Activated T-helper 1 cell treated with anti-CD3 and anti-CD28 coated beads, Interleukin-12 subunit alpha, Interleukin-12 subunit beta, Interleukin-2, Interleukin-4 antibody, amounts not matched to agents 30 ng/mL and 10 ng/mL and 1 ng/mL, durations not matched to agents 14 hours and 24 hours and 36 hours (primary cell): ENCODE measurements at regions of chr6 and their contacts with region 1.

Region 1: DNA sequence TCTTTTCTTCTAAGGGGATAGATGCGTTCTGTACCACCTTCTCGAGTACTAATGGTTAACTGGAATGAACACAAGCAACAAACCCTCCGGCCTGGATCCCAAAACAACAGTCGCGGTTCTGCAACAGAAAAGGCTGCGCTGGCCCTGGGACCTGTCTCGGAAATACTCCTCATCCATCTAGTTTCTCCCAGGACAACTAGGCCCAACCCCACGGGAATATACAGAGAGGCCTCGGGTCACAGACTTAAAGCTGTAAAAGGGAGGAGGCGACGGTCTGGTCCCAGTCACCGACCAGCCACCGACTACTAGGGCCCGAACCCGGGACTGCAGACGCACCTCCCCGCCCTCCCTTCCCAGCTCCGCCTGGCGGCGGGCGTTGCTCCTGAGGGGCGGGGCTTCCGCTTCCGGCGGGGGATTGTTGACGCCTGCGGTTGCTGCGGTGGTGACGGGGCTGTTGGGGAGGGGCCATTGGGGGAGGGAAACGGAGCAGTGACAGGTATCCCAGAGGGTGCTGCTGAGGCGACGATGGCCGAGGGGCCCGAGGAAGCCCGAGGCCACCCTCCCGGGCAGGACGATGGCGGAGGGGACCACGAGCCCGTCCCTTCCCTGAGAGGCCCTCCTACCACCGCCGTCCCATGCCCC is at the start of gene FAM8A1:
- DNase-seq: peak; percentile 92
- H3K4me3 Mint-ChIP-seq: peak within 1 kb of the TSS; percentile 85
- H3K27ac Mint-ChIP-seq: peak within 1 kb of the TSS; percentile 78
- H3K4me1 Mint-ChIP-seq: peaks cover 35% of the 10 kb centered on the region
- H3K27me3 Mint-ChIP-seq: peaks cover 2% of the 10 kb centered on the region
- total RNA-seq, gene FAM8A1: 4.5 and 4.6 TPM in 2 replicates

Region 2: GRCh38 chr6:17458966-17459365 is 141.0 kb before region 1 on chr6:
- intact Hi-C with region 1: no loop called
- DNase-seq: no peak
- H3K4me3 Mint-ChIP-seq: no peak overlapping the region
- H3K27ac Mint-ChIP-seq: no peak overlapping the region
- H3K4me1 Mint-ChIP-seq: no peaks in the 10 kb centered on the region
- H3K27me3 Mint-ChIP-seq: peaks cover 5% of the 10 kb centered on the region

Region 3: GRCh38 chr6:17621003-17621402 is 21.0 kb after region 1 on chr6:
- intact Hi-C with region 1: loop called (anchors 2 kb)
- DNase-seq: no peak
- H3K4me3 Mint-ChIP-seq: no peak overlapping the region
- H3K27ac Mint-ChIP-seq: peak overlapping the region; percentile 45
- H3K4me1 Mint-ChIP-seq: peaks cover 36% of the 10 kb centered on the region
- H3K27me3 Mint-ChIP-seq: no peaks in the 10 kb centered on the region

Region 4: GRCh38 chr6:17656092-17656491 is 56.1 kb after region 1 on chr6:
- intact Hi-C with region 1: loop called (anchors 5 kb)
- DNase-seq: no peak
- H3K4me3 Mint-ChIP-seq: no peak overlapping the region
- H3K27ac Mint-ChIP-seq: peak overlapping the region; percentile 70
- H3K4me1 Mint-ChIP-seq: peaks cover 35% of the 10 kb centered on the region
- H3K27me3 Mint-ChIP-seq: no peaks in the 10 kb centered on the region

Region 5: DNA sequence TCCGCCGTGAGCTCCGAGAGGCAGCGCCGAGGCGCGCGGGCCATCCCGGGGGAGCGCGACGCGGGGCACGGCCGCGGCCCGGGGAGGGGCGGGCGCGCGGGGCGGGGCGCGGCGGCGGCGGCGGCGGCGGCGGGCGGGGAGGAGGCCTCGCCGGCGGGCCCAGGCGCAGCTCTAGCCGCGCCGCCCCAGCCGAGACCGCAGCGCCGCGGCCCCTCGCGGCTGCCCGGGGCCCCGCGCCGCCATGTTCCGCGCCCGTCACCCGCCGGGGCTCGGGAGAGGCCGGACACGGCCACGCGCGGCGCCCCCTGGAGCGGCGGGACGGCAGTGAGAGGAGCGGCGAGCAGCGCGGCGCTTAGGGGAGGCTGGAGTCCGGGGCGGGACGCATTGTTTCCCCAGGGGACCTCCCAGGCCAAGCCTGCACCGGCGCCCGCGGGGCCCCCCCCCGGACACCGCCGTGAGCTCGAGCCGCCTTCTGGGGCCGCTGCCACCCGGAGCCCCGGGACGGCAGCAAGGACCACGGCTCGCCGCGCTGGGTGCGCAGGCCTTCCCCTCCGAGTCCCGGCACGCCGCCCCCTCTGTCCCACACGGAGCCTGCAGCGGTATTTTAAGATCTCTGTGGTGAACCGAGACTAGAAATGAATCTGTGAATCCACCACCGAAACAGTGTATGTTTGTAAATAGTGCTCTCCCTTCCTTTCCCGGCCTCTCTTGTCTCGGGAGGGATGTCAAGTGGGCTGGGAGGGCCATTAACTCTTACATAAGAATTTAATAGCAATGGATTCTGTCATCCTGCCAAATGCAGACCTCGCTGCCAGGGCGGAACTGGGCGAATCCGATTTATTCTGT is 387.8 kb after region 1 on chr6 and contains the start of gene KIF13A:
- intact Hi-C with region 1: loop called (anchors 10 kb)
- DNase-seq: peak; percentile 5
- H3K4me3 Mint-ChIP-seq: peak within 1 kb of the TSS; percentile 85
- H3K27ac Mint-ChIP-seq: no peak within 1 kb of the TSS
- H3K4me1 Mint-ChIP-seq: peaks cover 9% of the 10 kb centered on the region
- H3K27me3 Mint-ChIP-seq: peaks cover 64% of the 10 kb centered on the region
- total RNA-seq, gene KIF13A: not detected in 2 replicates

Region 6: GRCh38 chr6:18264219-18264922 is 664.4 kb after region 1 on chr6 and contains the start of gene DEK:
- intact Hi-C with region 1: loop called (anchors 1 kb)
- DNase-seq: peak; percentile 77
- H3K4me3 Mint-ChIP-seq: peak within 1 kb of the TSS; percentile 87
- H3K27ac Mint-ChIP-seq: peak within 1 kb of the TSS; percentile 91
- H3K4me1 Mint-ChIP-seq: peaks cover 48% of the 10 kb centered on the region
- H3K27me3 Mint-ChIP-seq: peaks cover 4% of the 10 kb centered on the region
- total RNA-seq, gene DEK: 163 and 170 TPM in 2 replicates